ENCODE measurements at regions of chr16 and their contacts with region 1.

Region 1: GRCh38 chr16:85275533-85276249 is 163.4 kb upstream of the CIBAR2 start:
- DNase-seq: peak in 1 of 2 experiments; percentile 69
- H3K4me3 ChIP-seq: no peak overlapping the region
- H3K27ac ChIP-seq: no peak overlapping the region
- H3K4me1 ChIP-seq: no peaks in the 10 kb centered on the region
- H3K27me3 ChIP-seq: no peaks in the 10 kb centered on the region
- CTCF ChIP-seq: peak; percentile 91

Region 2: GRCh38 chr16:85305996-85306792 is 30.5 kb after region 1 on chr16:
- CTCF ChIA-PET with region 1: interaction called, 12 read pairs
- POLR2A ChIA-PET with region 1: no interaction called
- intact Hi-C with region 1: no loop called
- DNase-seq: peak; percentile 83 to 88
- H3K4me3 ChIP-seq: no peak overlapping the region
- H3K27ac ChIP-seq: no peak overlapping the region
- H3K4me1 ChIP-seq: peaks cover 10% of the 10 kb centered on the region
- H3K27me3 ChIP-seq: no peaks in the 10 kb centered on the region
- CTCF ChIP-seq: no peak

Region 3: GRCh38 chr16:85412911-85413520 is 137.3 kb after region 1 on chr16:
- CTCF ChIA-PET with region 1: no interaction called
- POLR2A ChIA-PET with region 1: no interaction called
- intact Hi-C with region 1: no loop called
- DNase-seq: no peak
- H3K4me3 ChIP-seq: no peak overlapping the region
- H3K27ac ChIP-seq: no peak overlapping the region
- H3K4me1 ChIP-seq: no peaks in the 10 kb centered on the region
- H3K27me3 ChIP-seq: no peaks in the 10 kb centered on the region
- CTCF ChIP-seq: no peak

Region 4: GRCh38 chr16:86016201-86016871 is 740.6 kb after region 1 on chr16:
- CTCF ChIA-PET with region 1: no interaction called
- POLR2A ChIA-PET with region 1: no interaction called
- intact Hi-C with region 1: loop called (anchors 10 kb)
- DNase-seq: peak in 1 of 2 experiments; percentile 13
- H3K4me3 ChIP-seq: no peak overlapping the region
- H3K27ac ChIP-seq: no peak overlapping the region
- H3K4me1 ChIP-seq: no peaks in the 10 kb centered on the region
- H3K27me3 ChIP-seq: peaks cover 44% of the 10 kb centered on the region
- CTCF ChIP-seq: peak; percentile 84